MCF 10A (cell line): ENCODE measurements at regions of chr10 and their contacts with region 1.

Region 1: GRCh38 chr10:61606951-61607907 is 55.5 kb upstream of the CABCOCO1 start:
- DNase-seq: peak; percentile 36
- H3K4me3 Mint-ChIP-seq: no peak overlapping the region
- H3K27ac Mint-ChIP-seq: no peak overlapping the region
- H3K4me1 Mint-ChIP-seq: peaks cover 23% of the 10 kb centered on the region
- H3K27me3 Mint-ChIP-seq: no peaks in the 10 kb centered on the region
- CTCF ChIP-seq: peak; percentile 39

Region 2: DNA sequence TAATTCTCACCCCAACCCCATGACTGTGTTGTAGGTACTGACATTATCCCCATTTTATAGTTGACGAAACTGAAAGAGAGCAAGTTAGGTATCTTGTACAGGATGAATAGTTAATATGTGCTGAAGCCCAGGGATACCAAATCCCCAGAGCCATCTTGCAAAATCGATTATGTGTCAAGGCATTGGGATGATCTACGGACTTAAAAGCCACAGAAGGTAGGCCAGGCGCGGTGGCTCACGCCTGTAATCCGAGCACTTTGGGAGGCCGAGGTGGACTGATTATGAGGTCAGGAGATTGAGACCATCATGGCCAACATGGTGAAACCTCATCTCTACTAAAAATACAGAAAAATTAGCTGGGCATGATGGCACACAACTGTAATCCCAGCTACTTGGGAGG is 420.8 kb before region 1 on chr10:
- CTCF ChIA-PET with region 1: no interaction called
- POLR2A ChIA-PET with region 1: no interaction called
- intact Hi-C with region 1: no loop called
- DNase-seq: no peak
- H3K4me3 Mint-ChIP-seq: no peak overlapping the region
- H3K27ac Mint-ChIP-seq: no peak overlapping the region
- H3K4me1 Mint-ChIP-seq: peaks cover 4% of the 10 kb centered on the region
- H3K27me3 Mint-ChIP-seq: no peaks in the 10 kb centered on the region
- CTCF ChIP-seq: no peak

Region 3: DNA sequence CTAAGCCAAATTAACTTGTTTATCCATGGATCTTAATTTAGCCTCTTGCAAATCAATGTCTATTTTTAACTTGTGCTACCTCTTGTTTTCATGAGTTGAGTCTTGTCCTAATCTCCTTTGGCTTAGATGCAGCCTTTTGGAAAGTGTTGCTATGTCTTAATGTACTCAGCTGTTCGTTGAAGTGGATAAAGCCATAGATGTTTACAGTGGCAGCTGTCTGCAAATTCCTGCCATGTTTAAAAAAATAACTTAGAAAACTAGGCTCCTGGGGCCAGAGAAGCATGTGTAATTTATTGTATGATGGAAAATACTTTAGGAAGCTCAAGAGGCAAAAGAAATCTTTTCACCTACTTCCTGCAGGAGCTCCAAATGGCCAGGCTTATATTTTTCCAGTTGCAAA is 410.2 kb before region 1 on chr10:
- CTCF ChIA-PET with region 1: no interaction called
- POLR2A ChIA-PET with region 1: no interaction called
- intact Hi-C with region 1: no loop called
- DNase-seq: no peak
- H3K4me3 Mint-ChIP-seq: no peak overlapping the region
- H3K27ac Mint-ChIP-seq: no peak overlapping the region
- H3K4me1 Mint-ChIP-seq: no peaks in the 10 kb centered on the region
- H3K27me3 Mint-ChIP-seq: no peaks in the 10 kb centered on the region
- CTCF ChIP-seq: no peak

Region 4: GRCh38 chr10:61635931-61636330 is 28.7 kb after region 1 on chr10:
- CTCF ChIA-PET with region 1: interaction called, 5 read pairs
- POLR2A ChIA-PET with region 1: interaction called, 19 read pairs
- intact Hi-C with region 1: no loop called
- DNase-seq: peak; percentile 75
- H3K4me3 Mint-ChIP-seq: no peak overlapping the region
- H3K27ac Mint-ChIP-seq: peak overlapping the region; percentile 93
- H3K4me1 Mint-ChIP-seq: peaks cover 33% of the 10 kb centered on the region
- H3K27me3 Mint-ChIP-seq: no peaks in the 10 kb centered on the region
- CTCF ChIP-seq: no peak